ENCODE measurements at regions of chr3 and their contacts with region 1.

Region 1: GRCh38 chr3:90091204-90091924 is 983.9 kb downstream of the EPHA3 start:
- DNase-seq: peak; percentile 14
- H3K4me3 ChIP-seq: no peak overlapping the region
- H3K27ac ChIP-seq: no peak overlapping the region
- H3K4me1 ChIP-seq: no peaks in the 10 kb centered on the region
- H3K27me3 ChIP-seq: no peaks in the 10 kb centered on the region
- CTCF ChIP-seq: peak; percentile 34 to 72

Region 2: GRCh38 chr3:88203642-88204055 is 1887.7 kb before region 1 on chr3:
- CTCF ChIA-PET with region 1: no interaction called
- dilution Hi-C with region 1: no loop called
- in situ Hi-C with region 1: loop called (anchors 10 kb)
- intact Hi-C with region 1: loop called (anchors 2 kb)
- DNase-seq: peak; percentile 42
- H3K4me3 ChIP-seq: no peak overlapping the region
- H3K27ac ChIP-seq: no peak overlapping the region
- H3K4me1 ChIP-seq: no peaks in the 10 kb centered on the region
- H3K27me3 ChIP-seq: no peaks in the 10 kb centered on the region
- CTCF ChIP-seq: peak; percentile 84 to 90

Region 3: DNA sequence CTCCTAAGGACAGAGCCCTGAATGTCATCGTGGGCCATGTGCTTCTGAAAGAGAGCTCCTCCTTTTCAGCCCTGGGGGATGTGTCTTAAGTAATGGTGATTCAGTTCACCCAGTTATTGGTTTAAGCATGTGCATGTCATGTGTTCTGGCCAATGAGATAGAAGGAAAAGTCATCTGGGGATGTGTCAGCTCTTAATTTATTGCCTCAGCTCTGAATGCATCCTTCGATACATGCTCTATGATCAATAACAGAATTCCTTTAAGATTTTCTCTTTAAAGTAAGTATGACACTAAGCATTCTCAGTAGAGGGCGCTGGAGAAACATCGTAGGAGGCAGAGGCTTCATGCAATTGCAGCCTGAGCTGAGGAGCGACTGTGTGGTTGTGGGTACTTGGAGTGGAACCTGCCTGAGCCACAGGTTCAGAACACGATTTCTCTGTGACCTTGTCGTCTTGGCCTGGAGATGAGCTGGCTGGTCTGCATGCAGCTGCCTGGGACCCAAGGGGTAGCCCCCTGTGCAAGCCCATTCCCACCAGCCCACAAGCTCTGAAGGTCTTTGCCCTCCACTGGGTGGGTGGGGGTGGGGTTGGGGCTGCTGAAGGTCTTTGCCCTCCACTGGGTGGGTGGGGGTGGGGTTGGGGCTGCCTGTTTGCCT is 1872.1 kb before region 1 on chr3:
- CTCF ChIA-PET with region 1: interaction called, 4 read pairs
- dilution Hi-C with region 1: no loop called
- in situ Hi-C with region 1: no loop called
- intact Hi-C with region 1: loop called (anchors 5 kb)
- DNase-seq: peak; percentile 48
- H3K4me3 ChIP-seq: no peak overlapping the region
- H3K27ac ChIP-seq: no peak overlapping the region
- H3K4me1 ChIP-seq: no peaks in the 10 kb centered on the region
- H3K27me3 ChIP-seq: no peaks in the 10 kb centered on the region
- CTCF ChIP-seq: peak; percentile 62 to 80

Region 4: DNA sequence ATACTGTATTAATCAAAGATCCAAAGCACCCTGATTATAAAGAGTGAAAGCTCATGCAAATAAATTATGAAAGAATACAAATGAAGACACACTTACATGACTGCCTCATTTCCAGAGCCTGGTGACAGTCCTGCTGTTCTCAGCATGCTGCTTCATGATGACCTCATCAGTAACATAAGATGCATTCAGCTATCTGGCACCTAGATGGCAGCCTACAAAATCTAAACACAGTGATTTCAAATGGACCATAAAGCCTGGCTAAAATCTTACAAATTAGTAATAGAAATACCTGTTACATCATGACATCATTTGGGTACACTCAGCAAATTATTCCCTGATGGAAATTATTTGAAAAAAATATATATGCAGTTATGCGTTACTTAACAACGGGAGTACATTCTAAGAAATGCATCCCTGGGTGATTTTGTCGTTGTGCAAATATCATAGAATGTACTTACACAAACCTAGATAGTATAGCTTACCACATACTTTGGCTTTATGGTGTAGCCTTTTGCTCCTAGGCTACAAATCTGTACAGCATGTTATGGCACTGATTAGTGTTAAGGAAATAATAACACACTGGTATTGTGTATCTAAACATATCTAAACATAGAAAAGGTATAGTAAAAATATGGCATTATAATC is 776.8 kb before region 1 on chr3:
- CTCF ChIA-PET with region 1: no interaction called
- dilution Hi-C with region 1: no loop called
- in situ Hi-C with region 1: no loop called
- intact Hi-C with region 1: loop called (anchors 2 kb)
- DNase-seq: peak; percentile 35
- H3K4me3 ChIP-seq: no peak overlapping the region
- H3K27ac ChIP-seq: no peak overlapping the region
- H3K4me1 ChIP-seq: no peaks in the 10 kb centered on the region
- H3K27me3 ChIP-seq: no peaks in the 10 kb centered on the region
- CTCF ChIP-seq: peak; percentile 12 to 47

Region 5: GRCh38 chr3:89506462-89507103 is 584.8 kb before region 1 on chr3:
- CTCF ChIA-PET with region 1: interaction called, 22 read pairs
- dilution Hi-C with region 1: no loop called
- in situ Hi-C with region 1: no loop called
- intact Hi-C with region 1: no loop called
- DNase-seq: no peak
- H3K4me3 ChIP-seq: no peak overlapping the region
- H3K27ac ChIP-seq: no peak overlapping the region
- H3K4me1 ChIP-seq: no peaks in the 10 kb centered on the region
- H3K27me3 ChIP-seq: no peaks in the 10 kb centered on the region
- CTCF ChIP-seq: no peak

Region 6: GRCh38 chr3:89795506-89795905 is 295.9 kb before region 1 on chr3:
- CTCF ChIA-PET with region 1: no interaction called
- dilution Hi-C with region 1: no loop called
- in situ Hi-C with region 1: no loop called
- intact Hi-C with region 1: no loop called
- DNase-seq: no peak
- H3K4me3 ChIP-seq: no peak overlapping the region
- H3K27ac ChIP-seq: no peak overlapping the region
- H3K4me1 ChIP-seq: no peaks in the 10 kb centered on the region
- H3K27me3 ChIP-seq: no peaks in the 10 kb centered on the region
- CTCF ChIP-seq: no peak

Region 7: GRCh38 chr3:89851974-89852621 is 239.3 kb before region 1 on chr3:
- CTCF ChIA-PET with region 1: no interaction called
- dilution Hi-C with region 1: no loop called
- in situ Hi-C with region 1: no loop called
- intact Hi-C with region 1: loop called (anchors 1 kb)
- DNase-seq: no peak
- H3K4me3 ChIP-seq: no peak overlapping the region
- H3K27ac ChIP-seq: no peak overlapping the region
- H3K4me1 ChIP-seq: no peaks in the 10 kb centered on the region
- H3K27me3 ChIP-seq: no peaks in the 10 kb centered on the region
- CTCF ChIP-seq: peak; percentile 44 to 50

Region 8: DNA sequence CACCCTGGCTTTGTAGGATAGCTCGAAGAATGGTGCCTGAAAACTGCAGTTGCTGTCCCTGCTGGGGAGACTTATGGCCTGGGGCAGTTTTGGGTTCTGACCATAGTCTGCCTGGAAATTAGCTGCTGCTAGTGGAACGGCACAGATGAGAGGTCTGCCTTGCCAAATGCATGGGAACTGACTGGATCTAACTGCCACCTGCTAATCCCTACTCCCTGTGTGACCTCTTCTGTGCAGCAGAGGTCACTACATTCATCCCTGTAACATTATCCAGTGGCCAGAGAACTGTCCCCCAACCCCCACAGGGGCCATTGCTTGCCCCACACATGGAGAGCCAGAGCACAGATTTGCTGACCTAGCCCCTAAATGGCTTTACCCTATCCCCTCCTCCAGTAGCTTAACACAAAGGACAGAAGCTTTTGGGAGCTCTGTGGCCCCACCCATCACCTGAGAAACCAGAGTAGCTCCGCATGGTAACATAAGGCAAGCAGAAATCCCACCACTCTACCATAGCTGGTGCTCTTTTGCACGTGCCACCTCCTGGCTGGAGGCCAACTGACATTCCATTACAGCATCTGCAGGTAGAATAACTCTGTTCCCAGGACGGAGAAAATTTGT is 143.9 kb before region 1 on chr3:
- CTCF ChIA-PET with region 1: no interaction called
- dilution Hi-C with region 1: no loop called
- in situ Hi-C with region 1: no loop called
- intact Hi-C with region 1: loop called (anchors 5 kb)
- DNase-seq: no peak
- H3K4me3 ChIP-seq: no peak overlapping the region
- H3K27ac ChIP-seq: no peak overlapping the region
- H3K4me1 ChIP-seq: peaks cover 4% of the 10 kb centered on the region
- H3K27me3 ChIP-seq: no peaks in the 10 kb centered on the region
- CTCF ChIP-seq: no peak